ENCODE measurements at regions of chr12 and their contacts with region 1.

Region 1: GRCh38 chr12:93502802-93503623 is 35.7 kb downstream of the MRPL42 start:
- DNase-seq: peak; percentile 57
- H3K4me3 ChIP-seq: no peak overlapping the region
- H3K27ac ChIP-seq: no peak overlapping the region
- H3K4me1 ChIP-seq: no peaks in the 10 kb centered on the region
- H3K27me3 ChIP-seq: no peaks in the 10 kb centered on the region
- CTCF ChIP-seq: peak; percentile 55 to 60
- POLR2A ChIP-seq: no peak

Region 2: DNA sequence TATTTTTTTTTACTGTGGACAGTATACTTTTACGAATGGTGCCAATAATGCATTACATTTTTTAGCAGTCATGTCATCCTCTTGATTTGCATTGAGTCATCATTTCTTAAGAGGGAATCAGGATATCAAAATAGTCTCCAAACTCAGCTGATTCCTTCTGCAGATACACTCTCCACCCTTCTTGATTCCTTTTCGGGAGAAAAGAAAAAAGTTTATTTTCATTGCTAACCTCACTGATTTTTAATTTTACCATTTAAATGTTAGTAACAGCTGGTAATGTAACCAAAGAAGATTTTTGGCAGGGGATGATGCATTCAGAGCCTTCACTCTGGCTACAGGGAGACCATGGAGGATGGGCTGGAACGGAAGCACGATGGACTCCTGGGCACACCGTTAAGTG is 11.8 kb after region 1 on chr12:
- CTCF ChIA-PET with region 1: interaction called, 29 read pairs
- POLR2A ChIA-PET with region 1: no interaction called
- dilution Hi-C with region 1: no loop called
- intact Hi-C with region 1: no loop called
- DNase-seq: no peak
- H3K4me3 ChIP-seq: no peak overlapping the region
- H3K27ac ChIP-seq: no peak overlapping the region
- H3K4me1 ChIP-seq: no peaks in the 10 kb centered on the region
- H3K27me3 ChIP-seq: no peaks in the 10 kb centered on the region
- CTCF ChIP-seq: no peak
- POLR2A ChIP-seq: no peak

Region 3: GRCh38 chr12:93526786-93527428 is 23.9 kb after region 1 on chr12:
- CTCF ChIA-PET with region 1: interaction called, 21 read pairs
- POLR2A ChIA-PET with region 1: no interaction called
- dilution Hi-C with region 1: no loop called
- intact Hi-C with region 1: no loop called
- DNase-seq: peak; percentile 62
- H3K4me3 ChIP-seq: no peak overlapping the region
- H3K27ac ChIP-seq: no peak overlapping the region
- H3K4me1 ChIP-seq: peaks cover 5% of the 10 kb centered on the region
- H3K27me3 ChIP-seq: peaks cover 2% of the 10 kb centered on the region in 2 experiments
- CTCF ChIP-seq: no peak
- POLR2A ChIP-seq: no peak

Region 4: GRCh38 chr12:93569656-93570551 is 66.9 kb after region 1 on chr12:
- CTCF ChIA-PET with region 1: interaction called, 42 read pairs
- POLR2A ChIA-PET with region 1: no interaction called
- dilution Hi-C with region 1: no loop called
- intact Hi-C with region 1: loop called (anchors 2 kb)
- DNase-seq: peak; percentile 74
- H3K4me3 ChIP-seq: peak overlapping the region; percentile 35 to 71 (median 68)
- H3K27ac ChIP-seq: no peak overlapping the region
- H3K4me1 ChIP-seq: peaks cover 24% of the 10 kb centered on the region
- H3K27me3 ChIP-seq: peaks cover 30 to 37% of the 10 kb centered on the region in 2 experiments
- CTCF ChIP-seq: peak; percentile 54 to 91
- POLR2A ChIP-seq: no peak

Region 5: DNA sequence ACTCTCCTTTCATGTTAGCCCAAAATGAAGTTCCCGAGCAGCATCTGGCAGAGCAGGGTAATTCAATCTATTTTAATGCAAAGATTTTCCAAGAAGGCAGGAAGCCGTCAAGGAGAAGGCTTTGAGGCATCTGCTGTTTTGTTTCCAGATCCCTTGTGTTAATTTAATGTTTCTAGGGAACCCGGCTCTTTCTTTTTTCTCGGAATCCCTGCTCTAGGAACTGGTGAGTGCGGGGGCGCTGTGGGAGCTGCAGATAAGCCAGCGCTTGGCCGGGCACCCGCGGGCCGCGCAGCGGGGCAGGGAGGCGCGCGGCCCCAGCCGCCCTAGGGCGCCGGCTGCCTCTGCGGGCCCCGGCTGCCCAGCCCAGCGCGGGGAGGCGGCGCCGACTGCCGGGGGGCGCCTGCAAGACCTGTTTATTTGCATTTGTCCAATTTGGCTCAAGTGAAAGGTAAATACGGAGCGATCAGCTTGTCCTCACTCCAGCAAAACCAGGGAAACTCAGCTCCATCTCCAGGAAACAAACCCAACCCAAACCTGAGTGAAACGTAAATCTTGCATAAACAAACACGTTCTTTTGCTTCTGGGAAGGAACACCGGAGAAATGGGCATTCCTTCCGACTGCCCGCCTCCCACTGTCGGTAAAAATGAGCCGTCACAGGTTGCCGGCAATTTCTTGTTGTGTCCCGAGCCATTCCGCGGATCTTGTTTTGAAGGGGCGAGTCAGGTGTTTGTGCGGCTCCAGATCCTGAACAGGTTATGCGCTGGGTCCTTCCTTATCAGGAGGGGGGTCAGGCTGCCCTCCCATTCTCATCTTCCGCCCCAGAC is 239.3 kb after region 1 on chr12:
- CTCF ChIA-PET with region 1: interaction called, 24 read pairs
- POLR2A ChIA-PET with region 1: no interaction called
- dilution Hi-C with region 1: no loop called
- intact Hi-C with region 1: loop called (anchors 2 kb)
- DNase-seq: peak; percentile 80
- H3K4me3 ChIP-seq: peak overlapping the region; percentile 34 to 82 (median 69)
- H3K27ac ChIP-seq: no peak overlapping the region
- H3K4me1 ChIP-seq: peaks cover 8% of the 10 kb centered on the region
- H3K27me3 ChIP-seq: no peaks in the 10 kb centered on the region
- CTCF ChIP-seq: peak; percentile 24 to 38
- POLR2A ChIP-seq: no peak

Region 6: GRCh38 chr12:93839064-93839463 is 336.1 kb after region 1 on chr12:
- CTCF ChIA-PET with region 1: interaction called, 13 read pairs
- POLR2A ChIA-PET with region 1: no interaction called
- dilution Hi-C with region 1: no loop called
- intact Hi-C with region 1: no loop called
- DNase-seq: no peak
- H3K4me3 ChIP-seq: no peak overlapping the region
- H3K27ac ChIP-seq: no peak overlapping the region
- H3K4me1 ChIP-seq: no peaks in the 10 kb centered on the region
- H3K27me3 ChIP-seq: no peaks in the 10 kb centered on the region
- CTCF ChIP-seq: no peak
- POLR2A ChIP-seq: no peak

Region 7: DNA sequence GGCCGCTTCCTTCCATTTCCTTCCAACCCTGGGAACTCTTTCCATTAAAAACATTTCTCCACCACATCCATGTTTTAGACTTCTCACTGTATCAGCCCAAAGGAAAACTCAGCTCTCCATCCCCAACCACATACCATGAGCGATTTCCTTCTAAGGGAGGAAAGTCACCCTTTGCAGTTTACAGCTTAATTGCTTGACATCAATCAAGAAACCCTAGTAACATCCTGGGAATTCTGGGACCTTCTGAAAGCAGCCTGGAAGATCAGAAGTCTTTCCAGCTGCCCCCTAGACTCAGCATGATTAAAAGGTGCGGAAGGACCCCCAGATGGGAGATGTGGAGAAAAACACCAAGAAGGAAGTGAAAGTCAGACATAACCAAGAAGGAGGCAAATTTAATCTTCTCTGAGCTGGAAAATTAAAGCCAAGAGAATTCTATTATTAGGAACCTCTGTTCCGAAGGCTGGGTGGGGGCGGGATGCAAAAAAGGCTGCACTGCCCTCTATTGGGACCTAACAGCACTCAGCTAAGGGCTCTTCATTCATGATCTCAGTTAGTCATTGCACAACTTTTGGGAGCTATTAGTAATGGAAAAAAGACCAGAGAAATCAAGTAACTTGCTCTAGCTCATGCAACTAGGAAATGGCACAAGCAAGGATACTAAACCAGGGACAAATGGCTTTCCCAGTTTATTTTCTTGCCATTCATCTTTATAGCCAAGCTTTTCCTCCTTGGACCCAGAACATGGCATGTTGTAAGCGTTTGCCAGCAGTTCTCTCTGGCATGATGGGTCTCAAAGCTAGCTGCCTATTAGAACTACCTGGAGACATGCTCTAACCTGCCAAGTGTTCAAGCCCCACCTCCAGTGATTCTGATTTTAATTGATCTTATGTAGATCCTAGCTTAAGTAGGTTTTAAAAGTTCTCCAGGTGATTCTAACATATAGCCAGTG is 572.2 kb after region 1 on chr12:
- CTCF ChIA-PET with region 1: interaction called, 42 read pairs
- POLR2A ChIA-PET with region 1: no interaction called
- dilution Hi-C with region 1: no loop called
- intact Hi-C with region 1: no loop called
- DNase-seq: peak; percentile 28
- H3K4me3 ChIP-seq: no peak overlapping the region
- H3K27ac ChIP-seq: no peak overlapping the region
- H3K4me1 ChIP-seq: no peaks in the 10 kb centered on the region
- H3K27me3 ChIP-seq: peaks cover 8 to 9% of the 10 kb centered on the region in 2 experiments
- CTCF ChIP-seq: peak; percentile 43 to 46
- POLR2A ChIP-seq: no peak

Measured in endothelial cell of umbilical vein (primary cell).